ENCODE measurements at regions of chr4 and their contacts with region 1.

Region 1: GRCh38 chr4:184474263-184475095 is at the start of gene IRF2:
- DNase-seq: peak; percentile 98 to 99
- ATAC-seq: peak; percentile 96
- H3K4me3 ChIP-seq: peak within 1 kb of the TSS; percentile 74 to 89
- H3K27ac ChIP-seq: peak within 1 kb of the TSS; percentile 95 to 99
- H3K4me1 ChIP-seq: no peaks in the 10 kb centered on the region
- H3K27me3 ChIP-seq: no peaks in the 10 kb centered on the region
- total RNA-seq, gene IRF2: 37.1 to 49.4 TPM

Region 2: GRCh38 chr4:184287697-184288255 is 186.7 kb before region 1 on chr4:
- intact Hi-C with region 1: loop called in 1 of 2 experiments (anchors 5 kb)
- DNase-seq: no peak
- ATAC-seq: peak; percentile 85
- H3K4me3 ChIP-seq: no peak overlapping the region
- H3K27ac ChIP-seq: no peak overlapping the region
- H3K4me1 ChIP-seq: no peaks in the 10 kb centered on the region
- H3K27me3 ChIP-seq: no peaks in the 10 kb centered on the region

Region 3: DNA sequence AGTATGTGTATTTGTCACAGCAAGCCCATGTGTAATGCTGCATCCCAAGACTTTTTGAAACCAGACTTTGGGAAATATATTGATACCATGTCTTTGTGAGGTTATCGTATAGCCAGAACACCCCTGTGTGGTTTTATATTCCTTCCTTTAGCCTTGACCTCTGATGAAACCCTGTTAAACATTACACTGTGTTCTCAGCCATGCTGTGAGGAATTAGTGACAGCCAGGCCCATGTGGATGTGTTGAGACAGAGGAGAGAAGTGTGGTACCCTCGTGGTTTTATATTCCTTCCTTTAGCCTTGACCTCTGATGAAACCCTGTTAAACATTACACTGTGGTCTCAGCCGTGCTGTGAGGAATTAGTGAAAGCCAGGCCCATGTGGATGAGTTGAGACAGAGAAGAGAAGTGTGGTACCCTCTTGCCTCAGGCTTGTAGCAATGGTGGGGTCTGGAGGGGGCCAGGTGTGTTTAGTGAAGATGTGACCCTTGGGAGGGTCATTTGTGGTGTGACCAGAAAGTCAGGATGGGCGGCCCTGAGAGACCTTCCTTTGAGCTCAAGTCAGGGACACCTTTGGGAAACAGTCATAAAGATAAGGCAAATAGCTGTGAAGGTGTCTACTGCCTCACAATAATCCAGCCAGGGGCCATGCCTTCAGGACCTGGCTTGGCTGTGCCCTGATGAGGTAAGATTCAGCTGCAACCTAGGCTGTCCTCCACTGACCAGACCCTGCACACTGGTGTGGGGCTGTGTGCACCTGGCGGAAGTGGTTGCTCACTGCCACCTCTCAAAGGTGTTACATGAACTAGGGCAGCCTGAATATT is 110.2 kb before region 1 on chr4:
- intact Hi-C with region 1: loop called in 1 of 2 experiments (anchors 5 kb)
- DNase-seq: no peak
- ATAC-seq: no peak
- H3K4me3 ChIP-seq: no peak overlapping the region
- H3K27ac ChIP-seq: no peak overlapping the region
- H3K4me1 ChIP-seq: peaks cover 1 to 2% of the 10 kb centered on the region in 2 donors
- H3K27me3 ChIP-seq: no peaks in the 10 kb centered on the region

Region 4: GRCh38 chr4:184424993-184425758 is 49.3 kb before region 1 on chr4:
- intact Hi-C with region 1: no loop called
- DNase-seq: no peak
- ATAC-seq: peak; percentile 15
- H3K4me3 ChIP-seq: no peak overlapping the region
- H3K27ac ChIP-seq: peak overlapping the region in 1 of 2 donors; percentile 16
- H3K4me1 ChIP-seq: no peaks in the 10 kb centered on the region
- H3K27me3 ChIP-seq: no peaks in the 10 kb centered on the region

Region 5: DNA sequence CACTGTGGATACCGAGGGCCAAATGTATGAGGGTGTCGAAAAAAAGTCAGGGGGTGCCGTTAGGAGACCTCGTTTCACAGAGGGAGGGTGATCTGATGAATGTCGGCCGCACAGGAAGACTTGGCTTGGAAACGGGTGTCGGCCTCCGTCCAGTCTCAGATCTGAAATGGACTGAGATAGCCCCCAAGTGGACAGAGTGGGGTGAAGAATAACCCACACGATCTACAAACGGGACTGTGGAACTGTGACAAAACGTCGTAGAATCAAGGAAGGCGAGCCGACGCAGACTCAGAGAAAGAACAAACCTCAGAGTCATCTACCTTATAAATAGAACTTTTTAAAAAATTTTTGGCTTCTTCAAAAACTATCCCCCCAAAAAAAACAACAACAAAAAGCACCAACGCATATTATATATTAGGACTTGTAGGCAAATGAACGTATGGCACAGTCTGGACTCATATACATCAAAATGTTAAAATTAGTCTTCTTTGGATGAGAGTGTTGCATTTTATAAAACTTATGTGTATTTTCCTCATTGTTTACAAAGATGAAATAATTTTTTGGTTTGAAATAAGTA is 63.6 kb after region 1 on chr4:
- intact Hi-C with region 1: loop called (anchors 1 to 2 kb)
- DNase-seq: peak; percentile 92 to 93
- ATAC-seq: peak; percentile 94
- H3K4me3 ChIP-seq: peak overlapping the region; percentile 43 to 64
- H3K27ac ChIP-seq: peak overlapping the region; percentile 20 to 35
- H3K4me1 ChIP-seq: peaks cover 0 to 4% of the 10 kb centered on the region in 2 donors
- H3K27me3 ChIP-seq: no peaks in the 10 kb centered on the region

Region 6: GRCh38 chr4:185395956-185396723 is 921.7 kb after region 1 on chr4:
- intact Hi-C with region 1: no loop called
- DNase-seq: peak; percentile 98
- ATAC-seq: peak; percentile 98
- H3K4me3 ChIP-seq: peak overlapping the region; percentile 71 to 76
- H3K27ac ChIP-seq: peak overlapping the region; percentile 89 to 98
- H3K4me1 ChIP-seq: no peaks in the 10 kb centered on the region
- H3K27me3 ChIP-seq: no peaks in the 10 kb centered on the region

Measured in aorta (tissue), 5 donors.